Activated CD4-positive, alpha-beta memory T cell treated with anti-CD3 and anti-CD28 coated beads for 36 hours (primary cell): ENCODE measurements at regions of chr4 and their contacts with region 1.

Region 1: GRCh38 chr4:183182873-183183725 is 84.0 kb downstream of the WWC2 start:
- DNase-seq: peak; percentile 74
- H3K4me3 Mint-ChIP-seq: no peak overlapping the region
- H3K27ac Mint-ChIP-seq: no peak overlapping the region
- H3K4me1 Mint-ChIP-seq: peaks cover 22% of the 10 kb centered on the region
- H3K27me3 Mint-ChIP-seq: peaks cover 29% of the 10 kb centered on the region

Region 2: GRCh38 chr4:182975806-182976205 is 207.3 kb before region 1 on chr4:
- CTCF ChIA-PET with region 1: no interaction called
- POLR2A ChIA-PET with region 1: no interaction called
- intact Hi-C with region 1: loop called (anchors 2 kb)
- DNase-seq: peak; percentile 19
- H3K4me3 Mint-ChIP-seq: no peak overlapping the region
- H3K27ac Mint-ChIP-seq: no peak overlapping the region
- H3K4me1 Mint-ChIP-seq: peaks cover 9% of the 10 kb centered on the region
- H3K27me3 Mint-ChIP-seq: peaks cover 15% of the 10 kb centered on the region

Region 3: DNA sequence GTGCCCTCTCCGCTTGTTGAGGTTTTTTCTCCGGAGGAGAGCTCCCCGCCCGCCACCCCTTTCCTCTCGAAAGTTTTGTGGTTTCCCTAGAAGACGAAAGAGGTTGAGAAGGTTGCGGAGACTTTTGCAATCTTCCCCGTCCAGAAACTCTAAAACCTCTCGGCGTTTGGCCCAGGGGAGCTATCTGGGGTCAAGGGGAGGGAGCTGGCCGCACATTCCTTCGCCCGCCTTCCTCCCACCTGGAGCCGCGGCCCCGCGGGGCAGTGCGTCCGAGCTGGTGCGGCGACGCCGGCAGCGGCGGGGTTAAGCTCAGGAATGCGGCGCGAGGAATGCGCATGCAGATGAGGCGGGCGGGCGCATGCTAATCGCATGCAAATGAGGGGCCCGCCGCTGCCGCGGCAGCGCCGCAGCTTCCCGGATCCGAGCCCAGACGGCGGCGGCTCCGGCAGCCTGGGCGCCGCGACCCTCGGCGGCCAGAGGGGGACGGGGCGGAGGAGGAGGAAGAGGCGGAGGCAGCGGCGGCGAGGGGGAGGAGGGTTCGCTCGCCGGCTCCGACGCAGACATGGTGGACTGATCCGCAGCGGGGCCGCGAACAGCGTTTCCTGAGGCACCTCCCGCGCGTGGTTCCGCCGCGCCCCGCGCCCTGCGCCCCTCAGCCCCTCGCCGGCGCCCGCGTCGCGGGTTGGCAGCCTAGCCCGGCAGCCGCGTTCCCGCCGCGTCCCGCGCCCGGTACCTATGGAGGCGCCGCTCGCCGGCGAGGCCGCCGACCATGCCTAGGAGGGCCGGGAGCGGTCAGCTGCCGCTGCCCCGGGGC is 84.2 kb before region 1 on chr4 and contains the start of gene WWC2:
- CTCF ChIA-PET with region 1: no interaction called
- POLR2A ChIA-PET with region 1: no interaction called
- intact Hi-C with region 1: loop called (anchors 2 kb)
- DNase-seq: peak; percentile 70
- H3K4me3 Mint-ChIP-seq: peak within 1 kb of the TSS; percentile 57
- H3K27ac Mint-ChIP-seq: no peak within 1 kb of the TSS
- H3K4me1 Mint-ChIP-seq: peaks cover 5% of the 10 kb centered on the region
- H3K27me3 Mint-ChIP-seq: peaks cover 17% of the 10 kb centered on the region
- total RNA-seq, gene WWC2: 3.6 to 5.4 TPM

Region 4: DNA sequence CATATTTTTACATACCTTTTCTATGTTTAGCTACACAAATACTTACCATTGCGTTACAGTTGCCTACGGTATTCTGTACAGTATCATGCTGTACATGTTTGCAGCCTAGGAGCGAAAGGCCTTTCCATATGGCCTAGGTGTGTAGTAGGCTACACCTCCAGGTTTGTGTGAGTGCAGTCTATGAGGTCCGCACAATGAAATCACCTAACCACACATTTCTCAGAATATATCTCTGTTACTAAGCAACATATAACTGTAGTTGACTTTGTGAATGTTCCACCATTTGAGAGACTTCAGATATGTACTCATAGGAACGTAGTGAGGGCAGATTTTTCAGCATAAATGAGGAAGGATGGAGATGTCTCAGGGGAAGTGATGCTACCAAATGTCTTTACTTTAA is 21.5 kb before region 1 on chr4:
- CTCF ChIA-PET with region 1: no interaction called
- POLR2A ChIA-PET with region 1: no interaction called
- intact Hi-C with region 1: loop called (anchors 2 kb)
- DNase-seq: no peak
- H3K4me3 Mint-ChIP-seq: no peak overlapping the region
- H3K27ac Mint-ChIP-seq: no peak overlapping the region
- H3K4me1 Mint-ChIP-seq: peaks cover 8% of the 10 kb centered on the region
- H3K27me3 Mint-ChIP-seq: no peaks in the 10 kb centered on the region